ENCODE measurements at regions of chr7 and their contacts with region 1.

Region 1: GRCh38 chr7:41773603-41774155 is 70.8 kb upstream of the INHBA start:
- DNase-seq: no peak
- ATAC-seq: no peak
- H3K4me3 ChIP-seq: no peak overlapping the region
- H3K27ac ChIP-seq: no peak overlapping the region
- H3K4me1 ChIP-seq: no peaks in the 10 kb centered on the region
- CTCF ChIP-seq: no peak
- EP300 ChIP-seq: no peak
- POLR2A ChIP-seq: no peak
- RAD21 ChIP-seq: no peak

Region 2: GRCh38 chr7:41544241-41544640 is 229.4 kb before region 1 on chr7:
- CTCF ChIA-PET with region 1: no interaction called
- POLR2A ChIA-PET with region 1: no interaction called
- DNase-seq: no peak
- ATAC-seq: no peak
- H3K4me3 ChIP-seq: no peak overlapping the region
- H3K27ac ChIP-seq: no peak overlapping the region
- H3K4me1 ChIP-seq: no peaks in the 10 kb centered on the region
- CTCF ChIP-seq: no peak
- EP300 ChIP-seq: no peak
- POLR2A ChIP-seq: no peak
- RAD21 ChIP-seq: no peak

Region 3: GRCh38 chr7:41716691-41717090 is 57.0 kb before region 1 on chr7:
- CTCF ChIA-PET with region 1: no interaction called
- POLR2A ChIA-PET with region 1: interaction called, 13 read pairs
- DNase-seq: no peak
- ATAC-seq: no peak
- H3K4me3 ChIP-seq: no peak overlapping the region
- H3K27ac ChIP-seq: no peak overlapping the region
- H3K4me1 ChIP-seq: no peaks in the 10 kb centered on the region
- CTCF ChIP-seq: no peak
- EP300 ChIP-seq: no peak
- POLR2A ChIP-seq: no peak
- RAD21 ChIP-seq: no peak

Measured in A549 (cell line).